ENCODE measurements at regions of chrX and their contacts with region 1.

Region 1: DNA sequence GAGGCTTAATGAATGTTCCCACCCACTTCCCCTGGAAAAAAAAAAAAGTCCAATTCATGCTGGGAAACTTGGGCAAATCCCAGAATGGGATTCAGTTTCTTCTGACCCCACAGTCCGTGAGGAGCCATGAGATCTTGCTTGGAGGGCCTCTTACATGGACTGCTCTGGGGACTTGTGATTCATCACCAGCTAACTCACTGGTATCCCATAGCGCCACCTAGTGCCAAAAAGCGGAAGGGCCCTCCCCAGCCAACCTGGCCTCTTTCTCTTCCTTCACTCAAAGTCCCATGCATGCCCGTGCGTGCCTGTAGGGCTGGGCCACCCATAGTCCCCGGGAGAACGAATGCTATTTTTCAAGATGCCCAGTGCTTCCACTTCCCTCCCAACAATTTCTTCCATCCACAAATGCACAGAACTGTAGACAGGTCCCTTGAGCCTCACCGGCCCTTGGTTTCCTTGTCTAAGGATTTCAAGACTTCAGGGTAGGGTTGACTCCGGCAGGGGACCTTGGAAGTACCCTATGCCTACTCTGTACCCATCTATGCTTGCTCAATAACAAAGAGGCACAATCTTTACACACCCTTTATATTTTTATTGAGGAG is 5.1 kb downstream of the RTL5 start:
- DNase-seq: peak; percentile 86
- ATAC-seq: peak; percentile 88
- H3K4me3 ChIP-seq: no peak overlapping the region
- H3K27ac ChIP-seq: no peak overlapping the region
- H3K4me1 ChIP-seq: peaks cover 10% of the 10 kb centered on the region
- H3K27me3 ChIP-seq: peaks cover 4% of the 10 kb centered on the region
- CTCF ChIP-seq: peak; percentile 83

Region 2: DNA sequence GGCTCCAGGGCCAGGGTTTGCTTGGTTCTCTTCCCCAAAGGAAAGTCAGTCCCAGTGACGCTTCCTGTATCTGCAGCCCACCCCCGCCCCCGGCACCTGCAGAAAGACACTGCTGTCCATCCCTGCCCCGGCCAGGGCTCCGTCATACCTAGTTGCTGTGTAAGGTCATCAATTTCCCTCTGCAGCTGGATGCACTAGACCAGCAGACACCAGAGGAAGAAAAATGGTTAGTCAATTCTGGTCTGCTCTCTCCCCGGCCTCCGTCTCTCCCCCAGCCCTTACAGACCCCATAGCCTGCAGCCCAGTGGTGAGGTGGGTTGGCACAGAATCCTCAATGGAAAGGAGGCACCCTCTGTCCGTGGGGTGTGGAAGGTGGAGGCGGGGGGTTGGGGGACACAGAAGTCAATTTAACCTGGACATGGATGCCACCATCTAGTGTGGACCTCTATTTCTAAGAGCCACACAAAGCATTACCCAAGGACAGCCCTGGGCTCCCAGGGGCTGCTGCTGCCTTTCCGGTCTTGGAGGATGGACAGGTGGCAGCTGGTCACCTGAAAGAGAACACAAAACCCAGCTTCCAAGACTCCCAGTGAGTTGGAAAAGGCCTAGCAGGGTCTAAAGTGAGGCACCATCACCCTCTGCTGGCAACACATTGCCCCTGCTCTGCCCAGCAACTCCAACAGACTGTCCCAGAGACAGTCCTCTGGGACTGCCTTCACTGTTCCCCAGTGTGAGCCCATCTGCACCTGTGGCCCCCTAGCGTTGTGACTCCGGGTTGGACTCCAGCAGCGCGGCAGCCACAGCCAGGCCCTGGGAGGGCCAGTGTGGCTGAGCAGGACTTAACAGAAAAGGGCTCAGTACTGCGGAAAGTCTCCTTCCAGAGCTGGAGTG is 256.2 kb before region 1 on chrX:
- CTCF ChIA-PET with region 1: no interaction called
- POLR2A ChIA-PET with region 1: no interaction called
- intact Hi-C with region 1: loop called (anchors 2 kb)
- DNase-seq: peak; percentile 55
- ATAC-seq: peak; percentile 86
- H3K4me3 ChIP-seq: no peak overlapping the region
- H3K27ac ChIP-seq: no peak overlapping the region
- H3K4me1 ChIP-seq: peaks cover 8% of the 10 kb centered on the region
- H3K27me3 ChIP-seq: peaks cover 12% of the 10 kb centered on the region
- CTCF ChIP-seq: peak; percentile 60

Region 3: DNA sequence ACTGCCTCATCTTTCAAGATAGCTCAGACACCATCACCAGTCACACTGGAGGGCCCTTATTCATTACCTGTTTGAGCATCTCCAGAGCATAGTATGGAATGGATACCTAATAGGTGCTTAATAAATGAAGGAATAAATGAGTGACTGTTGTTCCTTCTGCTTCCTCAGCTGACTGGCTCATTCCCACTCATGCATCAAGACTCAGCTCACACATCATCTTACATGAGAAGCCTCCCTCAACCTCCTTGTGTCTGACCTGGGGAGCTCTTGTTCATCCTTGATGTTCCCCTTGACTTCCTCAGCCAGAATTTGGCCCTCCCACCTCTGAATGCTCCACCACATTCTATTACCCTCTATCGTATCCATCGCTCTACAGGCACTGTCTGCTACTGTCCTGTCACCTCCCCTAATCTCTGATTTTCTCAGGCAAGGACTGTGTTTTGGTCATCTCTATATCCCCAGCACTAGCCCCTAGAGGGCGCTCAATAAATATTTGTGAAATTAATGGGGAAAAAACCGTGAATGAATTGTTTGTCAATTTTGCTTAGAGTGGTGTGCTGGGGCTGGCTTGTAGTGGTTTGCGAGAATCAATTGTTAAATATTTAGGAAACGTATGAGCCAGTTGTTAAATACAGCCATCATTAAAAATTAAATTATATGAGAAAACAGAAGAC is 127.7 kb before region 1 on chrX:
- CTCF ChIA-PET with region 1: interaction called, 9 read pairs
- POLR2A ChIA-PET with region 1: no interaction called
- intact Hi-C with region 1: loop called (anchors 1 kb)
- DNase-seq: peak; percentile 63
- ATAC-seq: peak; percentile 76
- H3K4me3 ChIP-seq: no peak overlapping the region
- H3K27ac ChIP-seq: no peak overlapping the region
- H3K4me1 ChIP-seq: peaks cover 4% of the 10 kb centered on the region
- H3K27me3 ChIP-seq: no peaks in the 10 kb centered on the region
- CTCF ChIP-seq: peak; percentile 79

Region 4: DNA sequence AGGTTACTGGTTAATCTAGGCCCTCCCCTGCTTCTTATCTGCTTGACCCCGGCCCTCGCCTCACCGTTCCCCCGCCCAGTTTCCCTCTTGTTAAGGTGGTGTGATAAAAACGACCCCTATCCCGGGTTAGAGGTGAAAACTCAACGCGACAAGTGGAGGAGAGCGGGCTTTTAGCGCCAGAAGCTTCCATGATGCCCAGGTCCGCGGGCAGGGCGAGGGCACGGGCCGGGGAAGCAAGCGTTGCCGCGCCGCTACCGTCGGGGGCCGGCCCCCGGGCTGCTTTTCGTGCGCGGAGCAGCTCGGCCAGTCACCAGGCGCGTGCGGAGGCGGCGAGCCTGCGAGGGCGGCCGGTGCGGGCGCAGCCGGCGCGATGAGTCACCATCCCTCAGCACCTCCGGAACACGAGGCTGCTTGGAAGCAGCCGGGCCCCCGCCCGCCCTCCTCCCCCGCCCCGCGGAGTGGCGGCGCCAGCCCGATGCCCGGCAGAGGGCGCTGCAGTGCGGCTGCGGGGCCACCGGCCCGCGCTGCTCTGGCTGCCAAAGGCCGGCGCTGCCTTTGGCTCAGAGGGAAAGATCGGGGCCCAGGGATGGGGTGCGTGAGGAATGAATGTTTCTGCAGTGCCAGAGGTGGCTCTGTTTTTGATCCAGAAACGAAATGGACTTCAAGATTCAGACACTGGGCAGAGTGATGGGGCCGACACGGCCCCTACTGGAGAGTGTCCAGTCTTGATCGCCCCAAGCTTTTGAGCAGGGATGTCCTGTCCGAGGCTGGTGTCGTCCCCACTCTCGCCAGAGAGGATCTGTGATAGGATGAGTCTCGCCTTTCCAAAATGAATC is 108.1 kb before region 1 on chrX:
- CTCF ChIA-PET with region 1: interaction called, 4 read pairs
- POLR2A ChIA-PET with region 1: no interaction called
- intact Hi-C with region 1: loop called (anchors 1 kb)
- DNase-seq: peak; percentile 91
- ATAC-seq: peak; percentile 97
- H3K4me3 ChIP-seq: peak overlapping the region; percentile 12; the same call in 1 of the 2 replicates
- H3K27ac ChIP-seq: peak overlapping the region; percentile 33; the same call in 1 of the 2 replicates
- H3K4me1 ChIP-seq: peaks cover 18% of the 10 kb centered on the region
- H3K27me3 ChIP-seq: no peaks in the 10 kb centered on the region
- CTCF ChIP-seq: peak; percentile 64

Region 5: GRCh38 chrX:72181178-72182125 is 54.8 kb after region 1 on chrX and contains the start of gene PIN4:
- CTCF ChIA-PET with region 1: no interaction called
- POLR2A ChIA-PET with region 1: no interaction called
- intact Hi-C with region 1: loop called (anchors 5 kb)
- DNase-seq: peak; percentile 97
- ATAC-seq: peak; percentile 96
- H3K4me3 ChIP-seq: peak within 1 kb of the TSS; percentile 78
- H3K27ac ChIP-seq: peak within 1 kb of the TSS; percentile 74
- H3K4me1 ChIP-seq: peaks cover 12% of the 10 kb centered on the region
- H3K27me3 ChIP-seq: no peaks in the 10 kb centered on the region
- CTCF ChIP-seq: no peak
- total RNA-seq, gene PIN4: 30.0 and 44.1 TPM in 2 replicates